ENCODE measurements at regions of chrX and their contacts with region 1.

Region 1: DNA sequence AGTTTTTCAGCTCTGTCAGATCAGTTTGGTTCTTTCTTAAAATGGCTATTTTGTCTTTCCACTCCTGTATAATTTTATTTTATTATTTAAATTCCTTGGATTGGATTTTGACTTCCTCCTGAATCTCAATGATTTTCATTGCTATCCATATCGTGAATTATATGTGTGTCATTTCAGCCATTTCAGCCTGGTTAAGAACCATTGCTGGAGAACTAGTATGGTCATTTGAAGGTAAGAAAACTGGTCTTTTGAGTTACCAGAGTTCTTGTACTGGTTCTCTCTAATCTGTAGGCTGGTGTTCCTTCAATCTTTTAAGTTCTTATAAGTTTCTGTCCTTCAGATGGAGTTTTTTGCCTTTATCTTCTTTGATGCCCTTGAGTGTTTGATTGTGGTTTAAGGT is 815.5 kb downstream of the KLHL13 start:
- DNase-seq: no peak

Region 2: GRCh38 chrX:116667346-116668134 is 633.5 kb before region 1 on chrX:
- intact Hi-C with region 1: loop called in 1 of 2 experiments (anchors 5 kb)
- DNase-seq: no peak